SK-N-SH (cell line): ENCODE measurements at regions of chr12 and their contacts with region 1.

Region 1: DNA sequence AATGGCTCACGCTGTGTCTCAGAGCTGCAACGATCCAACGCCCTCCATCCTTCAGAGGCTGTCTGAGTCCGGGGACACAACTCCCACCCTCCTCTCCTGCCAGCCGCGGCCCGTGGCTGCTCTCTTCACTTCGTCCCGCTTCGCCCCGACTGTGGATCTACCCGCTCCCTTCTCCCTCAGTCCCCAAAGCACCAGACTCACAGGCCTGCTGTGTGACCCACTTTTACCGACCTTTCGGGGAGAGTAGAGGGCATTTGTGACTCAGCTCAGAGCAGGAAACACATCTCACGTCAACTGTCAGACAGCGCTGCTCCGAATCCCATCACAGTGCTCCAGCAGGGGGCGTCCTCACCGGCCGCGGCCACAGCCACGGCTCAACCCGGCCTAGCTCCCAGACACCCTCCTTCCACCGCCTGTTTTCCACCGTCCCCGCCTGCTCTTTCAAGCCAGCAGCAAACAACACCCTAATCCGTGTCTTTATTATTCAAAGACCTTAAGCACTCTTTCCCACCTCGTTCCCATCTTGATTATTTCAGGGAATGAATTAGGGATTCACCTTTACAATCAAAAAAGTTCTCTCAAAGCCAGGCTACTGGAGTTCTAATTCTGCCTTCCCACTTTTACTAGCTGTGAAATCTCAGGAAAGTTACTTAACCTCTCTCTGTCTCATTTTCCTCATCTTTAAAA is 5.0 kb upstream of the AQP2 start:
- DNase-seq: peak; percentile 91
- H3K4me3 ChIP-seq: peak overlapping the region; percentile 33 to 36; a peak in 3 of 4 replicates
- H3K27ac ChIP-seq: peak overlapping the region in 1 of 2 experiments; percentile 29; a peak in 1 of 4 replicates
- H3K4me1 ChIP-seq: peaks cover 0 to 17% of the 10 kb centered on the region in 2 experiments; a peak in 1 of 4 replicates
- H3K27me3 ChIP-seq: no peaks in the 10 kb centered on the region
- CTCF ChIP-seq: peak; percentile 96
- EP300 ChIP-seq: no peak; a peak in 1 of 4 replicates
- RAD21 ChIP-seq: peak; percentile 63

Region 2: DNA sequence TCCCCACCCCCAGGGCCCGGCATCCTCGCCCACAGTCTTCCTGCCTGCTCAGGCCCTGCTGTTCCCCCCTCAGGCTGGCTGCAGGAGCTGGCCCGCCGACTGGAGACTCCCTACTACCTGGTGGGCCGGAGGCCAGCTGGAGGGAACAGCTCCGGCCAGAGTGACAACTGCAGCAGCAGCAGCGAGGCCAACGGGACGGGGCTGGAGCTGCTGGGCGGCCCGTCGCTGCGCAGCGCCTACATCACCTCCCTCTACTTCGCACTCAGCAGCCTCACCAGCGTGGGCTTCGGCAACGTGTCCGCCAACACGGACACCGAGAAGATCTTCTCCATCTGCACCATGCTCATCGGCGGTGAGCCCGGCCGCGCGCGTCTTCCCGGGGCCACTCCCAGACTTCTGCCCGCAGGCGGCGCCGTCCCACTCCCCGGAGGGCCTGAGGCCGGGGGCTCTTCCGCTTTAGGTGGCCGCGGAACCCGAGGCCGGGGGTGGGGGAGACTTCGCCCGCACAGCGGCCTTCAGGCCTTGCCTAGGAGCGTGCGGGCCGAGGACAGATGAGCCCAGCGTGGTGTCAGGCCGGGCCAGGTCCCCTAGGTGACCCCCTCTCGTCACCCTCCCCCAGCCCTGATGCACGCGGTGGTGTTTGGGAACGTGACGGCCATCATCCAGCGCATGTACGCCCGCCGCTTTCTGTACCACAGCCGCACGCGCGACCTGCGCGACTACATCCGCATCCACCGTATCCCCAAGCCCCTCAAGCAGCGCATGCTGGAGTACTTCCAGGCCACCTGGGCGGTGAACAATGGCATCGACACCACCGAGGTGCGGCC is 396.5 kb before region 1 on chr12:
- CTCF ChIA-PET with region 1: no interaction called
- POLR2A ChIA-PET with region 1: no interaction called
- DNase-seq: peak; percentile 38
- H3K4me3 ChIP-seq: no peak overlapping the region
- H3K27ac ChIP-seq: no peak overlapping the region
- H3K4me1 ChIP-seq: no peaks in the 10 kb centered on the region; a peak in 1 of 4 replicates
- H3K27me3 ChIP-seq: no peaks in the 10 kb centered on the region
- CTCF ChIP-seq: no peak
- EP300 ChIP-seq: no peak
- RAD21 ChIP-seq: no peak

Region 3: DNA sequence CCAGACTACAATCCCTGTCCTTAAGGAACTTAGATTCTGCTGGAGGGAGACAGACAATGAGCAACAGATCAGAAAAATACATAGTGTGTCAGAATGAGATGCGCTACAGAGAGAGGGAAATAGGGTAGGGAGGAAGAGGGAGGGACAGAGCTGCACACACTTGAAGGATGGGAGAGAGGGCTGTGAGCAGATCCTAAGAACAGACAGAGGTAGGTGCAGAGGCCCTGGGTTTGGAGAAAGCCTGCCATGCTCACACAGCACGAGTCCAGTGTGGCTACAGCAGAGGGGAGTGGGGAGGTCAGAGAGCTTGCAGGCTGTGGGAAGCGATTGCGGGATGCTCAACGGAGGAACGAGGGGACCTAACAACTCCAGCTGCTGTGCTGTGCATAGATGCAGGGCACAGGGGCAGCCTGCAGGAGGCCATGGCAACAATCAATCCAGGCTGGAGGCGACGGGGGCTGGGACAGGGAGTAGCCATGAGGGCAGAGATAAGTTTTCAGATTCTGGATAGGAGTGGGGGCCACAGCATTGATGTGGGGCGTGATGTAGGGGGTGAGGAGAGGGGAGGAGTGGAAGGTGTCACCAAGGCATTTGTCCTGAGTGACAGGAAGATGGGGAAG is 62.6 kb before region 1 on chr12:
- CTCF ChIA-PET with region 1: interaction called, 15 read pairs
- POLR2A ChIA-PET with region 1: no interaction called
- DNase-seq: no peak
- H3K4me3 ChIP-seq: no peak overlapping the region; a peak in 1 of 4 replicates
- H3K27ac ChIP-seq: no peak overlapping the region
- H3K4me1 ChIP-seq: peaks cover 0 to 17% of the 10 kb centered on the region in 2 experiments; a peak in 1 of 4 replicates
- H3K27me3 ChIP-seq: no peaks in the 10 kb centered on the region
- CTCF ChIP-seq: no peak
- EP300 ChIP-seq: no peak
- RAD21 ChIP-seq: no peak

Region 4: GRCh38 chr12:49909826-49910225 is 35.7 kb before region 1 on chr12:
- CTCF ChIA-PET with region 1: interaction called, 12 read pairs
- POLR2A ChIA-PET with region 1: no interaction called
- DNase-seq: no peak
- H3K4me3 ChIP-seq: no peak overlapping the region
- H3K27ac ChIP-seq: no peak overlapping the region
- H3K4me1 ChIP-seq: peaks cover 0 to 7% of the 10 kb centered on the region in 2 experiments; a peak in 1 of 4 replicates
- H3K27me3 ChIP-seq: no peaks in the 10 kb centered on the region
- CTCF ChIP-seq: no peak
- EP300 ChIP-seq: no peak
- RAD21 ChIP-seq: no peak

Region 5: GRCh38 chr12:49959570-49960465 is 14.3 kb after region 1 on chr12:
- CTCF ChIA-PET with region 1: interaction called, 56 read pairs
- POLR2A ChIA-PET with region 1: no interaction called
- DNase-seq: no peak
- H3K4me3 ChIP-seq: no peak overlapping the region
- H3K27ac ChIP-seq: 0 out of 4 replicates have a peak overlapping the region, but pooled peaks of 1 of the 2 experiments have one; percentile 18
- H3K4me1 ChIP-seq: peaks cover 3 to 19% of the 10 kb centered on the region in 2 experiments; a peak in 3 of 4 replicates
- H3K27me3 ChIP-seq: no peaks in the 10 kb centered on the region
- CTCF ChIP-seq: no peak
- EP300 ChIP-seq: 0 out of 4 replicates have a peak, but pooled peaks of 1 of the 2 experiments have one; percentile 49
- RAD21 ChIP-seq: no peak

Region 6: GRCh38 chr12:50016501-50017475 is 71.3 kb after region 1 on chr12:
- CTCF ChIA-PET with region 1: no interaction called
- POLR2A ChIA-PET with region 1: no interaction called
- DNase-seq: no peak
- H3K4me3 ChIP-seq: no peak overlapping the region
- H3K27ac ChIP-seq: peak overlapping the region; percentile 55 to 58
- H3K4me1 ChIP-seq: peaks cover 3 to 7% of the 10 kb centered on the region in 2 experiments; a peak in 3 of 4 replicates
- H3K27me3 ChIP-seq: no peaks in the 10 kb centered on the region
- CTCF ChIP-seq: no peak
- EP300 ChIP-seq: no peak
- RAD21 ChIP-seq: peak; percentile 26; the same call in 1 of the 2 replicates

Region 7: GRCh38 chr12:50074936-50075807 is 129.6 kb after region 1 on chr12:
- CTCF ChIA-PET with region 1: interaction called, 31 read pairs
- POLR2A ChIA-PET with region 1: no interaction called
- DNase-seq: peak; percentile 92
- H3K4me3 ChIP-seq: no peak overlapping the region; a peak in 1 of 4 replicates
- H3K27ac ChIP-seq: no peak overlapping the region; a peak in 1 of 4 replicates
- H3K4me1 ChIP-seq: peaks cover 0 to 9% of the 10 kb centered on the region in 2 experiments; a peak in 1 of 4 replicates
- H3K27me3 ChIP-seq: no peaks in the 10 kb centered on the region
- CTCF ChIP-seq: peak; percentile 86
- EP300 ChIP-seq: no peak
- RAD21 ChIP-seq: peak; percentile 92